Ascending aorta (tissue), 2 donors: ENCODE measurements at regions of chr5 and their contacts with region 1.

Region 1: DNA sequence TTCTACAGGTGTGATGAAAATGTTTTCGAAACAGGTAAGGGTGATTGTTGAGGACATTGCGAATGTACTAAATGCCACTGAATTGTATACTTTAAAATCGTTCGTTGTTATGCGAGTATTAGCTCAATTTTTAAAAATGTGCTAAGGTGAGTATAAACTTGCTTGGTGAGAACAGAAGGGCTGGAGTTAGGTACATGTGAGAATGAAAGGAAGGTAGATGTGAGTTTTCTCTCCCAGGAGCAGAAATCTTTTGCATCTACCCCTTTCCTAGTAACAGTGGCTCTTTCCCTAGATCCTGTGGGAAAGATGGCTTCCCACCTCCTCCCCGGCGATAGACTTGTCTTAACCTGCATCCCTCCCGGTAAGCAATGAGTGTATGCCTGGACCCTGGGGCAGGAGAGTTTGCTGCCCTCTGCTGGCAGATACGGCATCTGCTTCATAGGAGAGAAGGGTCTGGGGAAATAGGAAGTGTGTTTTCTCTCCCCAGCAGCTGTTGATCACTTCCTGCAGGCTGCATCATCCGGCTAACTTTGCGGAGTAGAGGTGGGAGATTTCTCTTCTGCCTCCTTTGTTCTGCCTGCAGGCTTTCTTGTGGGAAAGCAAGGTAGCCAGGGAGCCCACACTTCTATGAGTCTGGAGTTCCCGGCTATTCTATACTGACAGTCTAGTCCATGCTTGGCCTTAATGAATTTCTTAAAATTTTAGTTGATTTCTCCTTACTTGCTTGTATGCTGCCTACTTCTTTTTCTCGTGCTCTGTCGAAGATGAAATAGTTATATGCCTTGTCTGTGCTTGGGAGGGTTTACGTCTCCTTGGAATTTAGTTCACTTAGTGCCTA is 373.3 kb upstream of the SEMA6A start:
- DNase-seq: peak in 1 of 2 donors; percentile 61
- H3K4me3 ChIP-seq: no peak overlapping the region
- H3K27ac ChIP-seq: no peak overlapping the region
- H3K4me1 ChIP-seq: no peaks in the 10 kb centered on the region
- H3K27me3 ChIP-seq: no peaks in the 10 kb centered on the region
- CTCF ChIP-seq: peak in 2 of 3 experiments; percentile 10 to 39

Region 2: DNA sequence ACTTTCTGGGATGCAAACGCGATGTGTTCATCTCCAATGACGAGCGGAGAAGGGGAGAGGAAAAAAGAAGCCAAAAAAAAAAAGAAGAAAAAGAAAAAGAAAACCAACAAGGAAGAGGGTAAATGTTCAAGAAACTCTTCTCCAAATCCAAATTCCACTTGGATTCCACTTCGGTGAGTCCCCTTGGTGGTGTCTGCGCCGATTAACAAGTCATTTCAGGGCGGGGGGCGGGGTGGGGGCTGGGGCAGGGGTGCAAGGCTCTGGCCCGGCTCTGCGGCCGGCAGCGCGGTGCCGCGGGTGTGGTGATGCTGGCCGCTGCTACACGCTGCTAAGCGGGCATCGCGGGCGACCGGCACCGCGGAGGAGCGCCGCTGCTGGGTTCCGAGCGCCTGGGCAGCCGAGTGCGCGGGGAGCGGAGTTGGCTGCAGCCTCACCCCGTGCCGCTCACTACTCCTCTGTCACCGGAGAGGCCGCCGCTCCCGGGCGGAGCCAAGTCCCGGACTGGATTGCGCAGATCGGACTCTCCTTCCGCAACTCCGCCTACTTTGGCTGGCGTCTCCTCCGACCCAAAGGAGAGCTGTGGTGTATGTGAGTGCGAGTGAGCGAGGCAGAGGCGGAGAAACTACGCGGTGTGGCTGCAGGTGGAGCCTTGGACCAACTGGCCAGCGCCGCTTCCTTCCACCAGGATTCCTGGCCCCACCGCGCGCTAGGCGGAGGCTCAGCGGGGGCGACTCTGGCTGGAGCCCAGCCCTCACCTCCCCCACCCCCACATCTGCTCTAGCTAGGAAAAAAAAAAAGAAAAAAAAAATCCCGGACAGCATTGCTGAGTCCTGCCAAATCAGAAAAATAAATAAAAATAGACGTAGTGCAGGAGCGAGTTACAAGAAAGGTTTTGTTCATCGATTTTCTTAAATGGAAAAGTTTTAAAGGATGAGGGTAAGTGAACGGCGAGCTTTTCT is 373.3 kb before region 1 on chr5 and contains the start of gene SEMA6A:
- intact Hi-C with region 1: loop called (anchors 5 kb)
- DNase-seq: peak; percentile 41 to 89
- H3K4me3 ChIP-seq: peak within 1 kb of the TSS; percentile 62 to 70
- H3K27ac ChIP-seq: peak within 1 kb of the TSS in 1 of 2 donors; percentile 34
- H3K4me1 ChIP-seq: peaks cover 8 to 21% of the 10 kb centered on the region in 2 donors
- H3K27me3 ChIP-seq: no peaks in the 10 kb centered on the region
- CTCF ChIP-seq: peak in 1 of 3 experiments; percentile 18
- total RNA-seq, gene SEMA6A: 17.8 TPM

Region 3: GRCh38 chr5:116671211-116671736 is 276.6 kb before region 1 on chr5:
- intact Hi-C with region 1: no loop called
- DNase-seq: no peak
- H3K4me3 ChIP-seq: no peak overlapping the region
- H3K27ac ChIP-seq: no peak overlapping the region
- H3K4me1 ChIP-seq: no peaks in the 10 kb centered on the region
- H3K27me3 ChIP-seq: no peaks in the 10 kb centered on the region
- CTCF ChIP-seq: no peak

Region 4: GRCh38 chr5:116766470-116766947 is 181.4 kb before region 1 on chr5:
- intact Hi-C with region 1: no loop called
- DNase-seq: no peak
- H3K4me3 ChIP-seq: no peak overlapping the region
- H3K27ac ChIP-seq: no peak overlapping the region
- H3K4me1 ChIP-seq: no peaks in the 10 kb centered on the region
- H3K27me3 ChIP-seq: no peaks in the 10 kb centered on the region
- CTCF ChIP-seq: no peak